CD8-positive, alpha-beta memory T cell (primary cell): ENCODE measurements at regions of chr6 and their contacts with region 1.

Region 1: DNA sequence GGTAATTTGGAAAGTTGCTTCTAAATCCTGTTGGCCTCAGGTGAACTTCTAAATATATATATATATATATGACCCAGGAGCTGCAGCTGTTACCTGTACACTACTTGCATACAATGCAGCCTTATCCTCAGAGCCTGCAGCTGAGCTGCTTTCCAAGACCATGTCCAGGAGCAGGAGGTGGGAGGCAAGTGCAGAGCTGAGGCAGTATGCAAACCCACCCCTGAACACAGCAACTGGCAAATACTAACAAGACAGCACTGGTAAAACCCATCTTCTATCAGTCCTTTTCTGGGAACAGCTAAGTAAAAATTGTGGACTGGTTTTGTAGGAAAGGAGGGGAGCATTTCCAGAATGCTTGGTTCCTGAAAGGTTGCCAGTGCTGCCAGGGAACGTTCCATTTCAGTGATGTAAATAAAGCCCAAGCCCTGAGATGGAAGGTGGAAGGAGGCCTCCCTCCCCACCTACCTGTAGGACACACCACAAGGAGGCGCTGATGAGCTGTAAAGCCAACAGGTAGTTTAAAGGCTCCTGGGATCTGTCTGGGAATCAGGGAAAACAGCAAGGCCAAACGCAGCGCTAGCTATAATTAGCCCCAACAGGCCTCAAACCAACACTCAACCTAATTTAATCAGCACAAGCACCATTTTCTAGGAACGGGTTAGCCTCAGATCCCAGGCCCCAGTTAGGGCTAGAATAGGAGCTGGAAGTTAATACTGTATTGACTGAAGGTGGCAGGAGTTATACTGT is 93.8 kb upstream of the MAP7 start:
- DNase-seq: peak; percentile 55 to 85 (median 73)
- H3K4me3 ChIP-seq: no peak overlapping the region
- H3K4me3 Mint-ChIP-seq: no peak overlapping the region
- H3K27ac ChIP-seq: no peak overlapping the region
- H3K27ac Mint-ChIP-seq: peak overlapping the region in 7 of 8 donors; percentile 17 to 76 (median 41)
- H3K4me1 ChIP-seq: peaks cover 17% of the 10 kb centered on the region
- H3K4me1 Mint-ChIP-seq: peaks cover 6 to 14% (median 13%) of the 10 kb centered on the region in 3 donors
- H3K27me3 ChIP-seq: no peaks in the 10 kb centered on the region
- H3K27me3 Mint-ChIP-seq: no peaks in the 10 kb centered on the region

Region 2: GRCh38 chr6:136628996-136629395 is 15.0 kb before region 1 on chr6:
- CTCF ChIA-PET with region 1: interaction called, 23 read pairs
- POLR2A ChIA-PET with region 1: no interaction called
- DNase-seq: no peak
- H3K4me3 ChIP-seq: no peak overlapping the region
- H3K4me3 Mint-ChIP-seq: no peak overlapping the region
- H3K27ac ChIP-seq: no peak overlapping the region
- H3K27ac Mint-ChIP-seq: peak overlapping the region in 1 of 8 donors; percentile 29
- H3K4me1 ChIP-seq: no peaks in the 10 kb centered on the region
- H3K4me1 Mint-ChIP-seq: peaks cover 0 to 2% (median 0%) of the 10 kb centered on the region in 3 donors
- H3K27me3 ChIP-seq: no peaks in the 10 kb centered on the region
- H3K27me3 Mint-ChIP-seq: no peaks in the 10 kb centered on the region

Region 3: GRCh38 chr6:136669299-136669699 is 25.3 kb after region 1 on chr6:
- CTCF ChIA-PET with region 1: interaction called, 11 read pairs
- POLR2A ChIA-PET with region 1: no interaction called
- DNase-seq: no peak
- H3K4me3 ChIP-seq: no peak overlapping the region
- H3K4me3 Mint-ChIP-seq: no peak overlapping the region
- H3K27ac ChIP-seq: no peak overlapping the region
- H3K27ac Mint-ChIP-seq: no peak overlapping the region
- H3K4me1 ChIP-seq: no peaks in the 10 kb centered on the region
- H3K4me1 Mint-ChIP-seq: peaks cover 0 to 6% (median 0%) of the 10 kb centered on the region in 3 donors
- H3K27me3 ChIP-seq: no peaks in the 10 kb centered on the region
- H3K27me3 Mint-ChIP-seq: no peaks in the 10 kb centered on the region

Region 4: GRCh38 chr6:136723780-136724179 is 79.8 kb after region 1 on chr6:
- CTCF ChIA-PET with region 1: interaction called, 12 read pairs
- POLR2A ChIA-PET with region 1: no interaction called
- DNase-seq: peak; percentile 7 to 61 (median 23)
- H3K4me3 ChIP-seq: no peak overlapping the region
- H3K4me3 Mint-ChIP-seq: peak overlapping the region in 4 of 7 donors; percentile 20 to 74 (median 44)
- H3K27ac ChIP-seq: no peak overlapping the region
- H3K27ac Mint-ChIP-seq: peak overlapping the region in 7 of 8 donors; percentile 4 to 80 (median 45)
- H3K4me1 ChIP-seq: peaks cover 5% of the 10 kb centered on the region
- H3K4me1 Mint-ChIP-seq: peaks cover 50 to 64% (median 57%) of the 10 kb centered on the region in 3 donors
- H3K27me3 ChIP-seq: no peaks in the 10 kb centered on the region
- H3K27me3 Mint-ChIP-seq: no peaks in the 10 kb centered on the region

Region 5: GRCh38 chr6:136761227-136761922 is 117.4 kb after region 1 on chr6:
- CTCF ChIA-PET with region 1: interaction called, 31 read pairs
- POLR2A ChIA-PET with region 1: no interaction called
- DNase-seq: peak in 2 of 5 donors; percentile 30 to 53
- H3K4me3 ChIP-seq: peak overlapping the region; percentile 16
- H3K4me3 Mint-ChIP-seq: peak overlapping the region; percentile 57 to 87 (median 82)
- H3K27ac ChIP-seq: no peak overlapping the region
- H3K27ac Mint-ChIP-seq: peak overlapping the region; percentile 58 to 97 (median 92)
- H3K4me1 ChIP-seq: peaks cover 60% of the 10 kb centered on the region
- H3K4me1 Mint-ChIP-seq: peaks cover 75 to 80% (median 75%) of the 10 kb centered on the region in 3 donors
- H3K27me3 ChIP-seq: no peaks in the 10 kb centered on the region
- H3K27me3 Mint-ChIP-seq: no peaks in the 10 kb centered on the region

Region 6: DNA sequence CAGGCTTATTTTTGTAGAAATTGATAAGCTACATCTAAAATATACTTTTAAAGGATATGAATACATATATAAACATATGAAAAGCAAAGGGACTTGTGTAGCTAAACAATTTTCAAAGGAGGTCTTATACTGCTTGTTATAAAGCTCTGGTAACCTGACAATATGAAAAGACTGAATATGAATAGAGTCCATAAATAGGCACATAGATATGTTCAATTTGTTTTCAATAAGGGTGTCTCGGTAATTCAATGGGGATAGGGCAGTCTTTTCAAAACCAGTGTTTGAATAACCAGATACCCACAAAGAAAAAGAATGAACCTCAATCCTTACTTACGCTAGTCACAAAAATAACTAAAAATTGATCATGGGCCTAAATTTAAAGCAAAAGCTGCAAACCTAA is 157.6 kb after region 1 on chr6:
- CTCF ChIA-PET with region 1: interaction called, 52 read pairs
- POLR2A ChIA-PET with region 1: no interaction called
- DNase-seq: no peak
- H3K4me3 ChIP-seq: no peak overlapping the region
- H3K4me3 Mint-ChIP-seq: no peak overlapping the region
- H3K27ac ChIP-seq: no peak overlapping the region
- H3K27ac Mint-ChIP-seq: no peak overlapping the region
- H3K4me1 ChIP-seq: no peaks in the 10 kb centered on the region
- H3K4me1 Mint-ChIP-seq: no peaks in the 10 kb centered on the region
- H3K27me3 ChIP-seq: no peaks in the 10 kb centered on the region
- H3K27me3 Mint-ChIP-seq: peaks cover 3 to 6% of the 10 kb centered on the region in 2 donors